ENCODE measurements at regions of chr2 and their contacts with region 1.

Region 1: GRCh38 chr2:101717071-101717845 is 19.8 kb downstream of the MAP4K4 start:
- DNase-seq: peak; percentile 62
- ATAC-seq: peak; percentile 67
- H3K4me3 Mint-ChIP-seq: peak overlapping the region; percentile 44
- H3K27ac Mint-ChIP-seq: peak overlapping the region; percentile 75
- H3K4me1 Mint-ChIP-seq: peaks cover 70% of the 10 kb centered on the region
- H3K27me3 Mint-ChIP-seq: no peaks in the 10 kb centered on the region

Region 2: DNA sequence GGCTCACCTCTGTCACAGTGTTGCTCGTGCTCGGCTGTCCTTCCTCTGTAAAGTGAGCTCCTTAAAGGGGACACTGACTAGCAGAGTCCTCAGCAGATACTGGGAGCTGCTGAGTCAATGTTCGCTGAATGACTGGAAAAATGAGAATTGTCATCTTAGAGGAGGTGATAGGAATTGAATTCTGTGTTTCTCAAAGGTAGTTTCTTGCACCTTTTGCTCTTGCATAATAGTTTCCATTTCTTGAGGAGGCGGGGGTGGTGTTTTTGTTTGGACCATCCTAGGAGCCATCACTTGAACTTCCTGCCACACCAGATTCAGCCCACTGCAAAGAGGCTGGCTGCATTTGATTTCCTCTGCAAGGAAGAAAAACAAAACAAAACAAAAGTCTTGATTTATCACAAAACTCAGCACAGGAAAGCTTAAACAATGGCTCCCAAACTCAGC is 231.0 kb before region 1 on chr2:
- CTCF ChIA-PET with region 1: no interaction called
- POLR2A ChIA-PET with region 1: no interaction called
- DNase-seq: no peak
- ATAC-seq: no peak
- H3K4me3 Mint-ChIP-seq: no peak overlapping the region
- H3K27ac Mint-ChIP-seq: peak overlapping the region; percentile 2
- H3K4me1 Mint-ChIP-seq: peaks cover 16% of the 10 kb centered on the region
- H3K27me3 Mint-ChIP-seq: no peaks in the 10 kb centered on the region

Region 3: DNA sequence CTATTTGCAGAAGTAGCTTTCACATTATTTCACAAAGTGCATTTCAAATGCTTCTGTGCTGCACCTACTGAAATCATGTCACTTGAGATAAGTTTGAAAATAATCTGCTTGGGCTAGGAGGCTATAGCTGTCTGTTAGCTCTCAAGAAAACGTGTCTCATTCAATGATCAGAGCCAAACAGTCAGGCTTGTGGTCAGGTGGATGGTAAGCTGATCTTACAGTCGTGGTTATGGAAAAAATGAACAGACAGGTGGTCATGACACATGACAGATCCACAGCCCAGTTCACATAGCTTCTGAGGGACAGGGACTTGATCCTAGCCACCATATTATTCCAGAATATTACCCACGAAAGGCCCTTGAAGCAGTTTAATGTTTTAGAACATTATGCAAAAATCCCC is 215.8 kb before region 1 on chr2:
- CTCF ChIA-PET with region 1: no interaction called
- POLR2A ChIA-PET with region 1: no interaction called
- DNase-seq: peak; percentile 32
- ATAC-seq: peak; percentile 57
- H3K4me3 Mint-ChIP-seq: no peak overlapping the region
- H3K27ac Mint-ChIP-seq: peak overlapping the region; percentile 73
- H3K4me1 Mint-ChIP-seq: peaks cover 18% of the 10 kb centered on the region
- H3K27me3 Mint-ChIP-seq: no peaks in the 10 kb centered on the region

Region 4: DNA sequence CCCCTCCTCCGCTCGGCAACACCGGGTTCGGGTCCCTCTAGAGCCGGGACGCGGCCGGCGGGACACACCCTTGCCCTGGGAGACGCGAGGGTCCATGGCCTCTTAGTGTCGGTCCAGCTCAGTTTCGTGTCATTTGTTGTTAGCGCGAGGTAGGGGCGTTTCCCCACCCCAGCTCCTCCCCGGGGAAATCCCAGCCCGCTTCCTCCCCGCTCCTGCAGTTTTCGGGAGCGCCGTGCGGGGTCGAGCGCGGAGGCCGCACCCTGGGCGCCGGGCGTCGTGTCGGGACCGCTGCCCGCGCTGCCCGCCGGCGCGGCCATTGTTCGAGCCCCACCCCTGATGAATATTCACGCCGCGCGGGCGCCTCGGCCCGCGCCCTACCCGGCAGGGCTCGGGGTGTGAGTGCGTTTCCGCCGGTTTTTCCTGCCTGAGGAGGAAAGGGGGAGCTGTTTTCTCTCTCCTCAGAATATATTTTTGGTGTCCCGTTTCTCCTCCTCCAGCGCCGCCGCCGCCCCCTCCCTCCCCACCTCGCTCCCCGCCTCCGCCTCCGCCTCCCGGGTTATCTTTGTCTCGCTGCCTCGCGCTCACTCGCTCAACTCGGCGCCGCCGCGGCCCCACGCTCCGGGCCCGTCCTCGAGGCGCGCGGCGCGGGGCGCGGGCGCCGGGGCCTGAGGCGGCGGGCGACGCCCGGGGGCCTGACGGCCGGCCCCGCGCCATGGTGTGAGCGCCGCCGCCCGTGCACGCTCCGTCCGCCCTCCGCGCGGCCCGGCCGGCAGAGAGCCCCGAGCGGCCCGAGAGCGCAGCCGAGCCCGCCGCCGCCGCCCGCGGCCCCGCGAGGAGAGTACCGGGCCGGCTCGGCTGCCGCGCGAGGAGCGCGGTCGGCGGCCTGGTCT is 19.9 kb before region 1 on chr2 and contains the start of gene MAP4K4:
- CTCF ChIA-PET with region 1: interaction called, 9 read pairs
- POLR2A ChIA-PET with region 1: interaction called, 38 read pairs
- DNase-seq: peak; percentile 84
- ATAC-seq: peak; percentile 73
- H3K4me3 Mint-ChIP-seq: peak within 1 kb of the TSS; percentile 86
- H3K27ac Mint-ChIP-seq: peak within 1 kb of the TSS; percentile 89
- H3K4me1 Mint-ChIP-seq: peaks cover 28% of the 10 kb centered on the region
- H3K27me3 Mint-ChIP-seq: peaks cover 12% of the 10 kb centered on the region
- total RNA-seq, gene MAP4K4: 90.2 to 92.2 TPM

Region 5: GRCh38 chr2:101704046-101704466 is 13.2 kb before region 1 on chr2:
- CTCF ChIA-PET with region 1: interaction called, 15 read pairs
- POLR2A ChIA-PET with region 1: interaction called, 38 read pairs
- DNase-seq: peak; percentile 46
- ATAC-seq: peak; percentile 45
- H3K4me3 Mint-ChIP-seq: peak overlapping the region; percentile 67
- H3K27ac Mint-ChIP-seq: peak overlapping the region; percentile 92
- H3K4me1 Mint-ChIP-seq: peaks cover 77% of the 10 kb centered on the region
- H3K27me3 Mint-ChIP-seq: no peaks in the 10 kb centered on the region

Measured in activated CD8-positive, alpha-beta T cell treated with anti-CD3 and anti-CD28 coated beads, Interleukin-2, amount 10 ng/mL, durations not matched to agents 7 days and 5 days (primary cell).